ENCODE measurements at regions of chr7 and their contacts with region 1.

Region 1: DNA sequence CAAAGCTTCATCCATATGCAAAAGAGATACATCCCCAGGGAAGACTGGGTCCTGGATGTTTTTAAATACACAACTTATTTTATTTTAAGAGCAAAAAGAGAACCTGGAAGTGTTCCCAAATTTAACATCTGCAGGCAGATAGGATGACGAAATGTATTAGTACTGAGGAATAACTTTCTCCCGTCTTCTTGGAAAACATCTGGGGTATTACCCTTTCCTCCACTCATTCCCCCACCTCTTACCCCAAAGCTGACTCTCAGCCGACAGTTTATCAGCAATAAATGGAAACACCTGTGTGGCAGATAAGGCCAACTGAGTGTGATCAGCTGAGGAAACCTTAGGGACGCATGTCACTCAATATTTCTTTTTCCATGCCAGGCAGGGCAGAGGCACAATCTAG is 435.6 kb upstream of the NPVF start:
- DNase-seq: no peak
- ATAC-seq: peak; percentile 60

Region 2: DNA sequence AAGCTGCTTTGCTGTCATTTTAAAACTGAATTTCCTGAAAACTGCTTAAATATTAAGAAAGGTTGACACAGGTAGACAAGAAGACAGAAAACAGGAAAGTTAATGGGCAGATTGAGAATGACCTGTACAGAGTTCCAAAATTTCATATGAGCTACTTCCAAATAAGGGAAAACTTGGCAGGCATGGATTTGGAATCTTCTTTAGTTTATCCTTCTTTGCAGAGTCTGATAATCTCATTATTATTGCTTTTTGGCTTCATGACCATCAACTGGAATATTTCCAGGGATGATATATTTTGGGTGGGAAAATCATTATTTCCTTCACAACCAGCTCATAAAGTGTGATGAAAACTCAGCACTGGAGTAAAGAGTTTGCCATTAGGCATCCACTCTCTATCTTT is 89.0 kb before region 1 on chr7:
- intact Hi-C with region 1: loop called (anchors 5 kb)
- DNase-seq: no peak
- ATAC-seq: no peak

Region 3: GRCh38 chr7:25624833-25625232 is 39.0 kb before region 1 on chr7:
- intact Hi-C with region 1: loop called (anchors 5 kb)
- DNase-seq: no peak
- ATAC-seq: peak; percentile 93

Measured in Right ventricle myocardium inferior (tissue), 1 donor.